Activated B cell treated with CpG ODN at 0.5 μM for 24 hours (primary cell): ENCODE measurements at regions of chr1 and their contacts with region 1.

Region 1: DNA sequence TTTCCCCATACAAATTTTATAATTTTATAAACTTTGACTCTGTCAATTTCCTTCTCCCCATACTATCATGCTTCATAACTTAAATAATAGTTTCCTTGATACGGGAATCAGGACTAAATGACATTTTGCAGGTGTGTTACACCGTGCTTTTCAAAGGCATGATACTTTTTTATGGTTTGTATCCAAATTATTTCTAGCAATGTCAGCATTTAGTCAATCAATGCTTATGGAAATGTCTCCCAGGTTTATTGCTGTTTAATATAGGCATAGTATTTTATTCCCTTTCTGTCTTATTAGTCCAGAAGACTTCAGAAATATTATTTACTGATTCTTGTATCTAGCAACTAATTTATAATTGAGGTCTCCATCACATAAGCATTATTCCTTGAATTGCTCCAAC is 23.4 kb downstream of the DRAM2 start:
- DNase-seq: no peak
- ATAC-seq: no peak
- H3K4me3 Mint-ChIP-seq: no peak overlapping the region
- H3K27ac Mint-ChIP-seq: peak overlapping the region; percentile 20
- H3K4me1 Mint-ChIP-seq: peaks cover 22% of the 10 kb centered on the region
- H3K27me3 Mint-ChIP-seq: no peaks in the 10 kb centered on the region
- CTCF ChIP-seq: no peak

Region 2: DNA sequence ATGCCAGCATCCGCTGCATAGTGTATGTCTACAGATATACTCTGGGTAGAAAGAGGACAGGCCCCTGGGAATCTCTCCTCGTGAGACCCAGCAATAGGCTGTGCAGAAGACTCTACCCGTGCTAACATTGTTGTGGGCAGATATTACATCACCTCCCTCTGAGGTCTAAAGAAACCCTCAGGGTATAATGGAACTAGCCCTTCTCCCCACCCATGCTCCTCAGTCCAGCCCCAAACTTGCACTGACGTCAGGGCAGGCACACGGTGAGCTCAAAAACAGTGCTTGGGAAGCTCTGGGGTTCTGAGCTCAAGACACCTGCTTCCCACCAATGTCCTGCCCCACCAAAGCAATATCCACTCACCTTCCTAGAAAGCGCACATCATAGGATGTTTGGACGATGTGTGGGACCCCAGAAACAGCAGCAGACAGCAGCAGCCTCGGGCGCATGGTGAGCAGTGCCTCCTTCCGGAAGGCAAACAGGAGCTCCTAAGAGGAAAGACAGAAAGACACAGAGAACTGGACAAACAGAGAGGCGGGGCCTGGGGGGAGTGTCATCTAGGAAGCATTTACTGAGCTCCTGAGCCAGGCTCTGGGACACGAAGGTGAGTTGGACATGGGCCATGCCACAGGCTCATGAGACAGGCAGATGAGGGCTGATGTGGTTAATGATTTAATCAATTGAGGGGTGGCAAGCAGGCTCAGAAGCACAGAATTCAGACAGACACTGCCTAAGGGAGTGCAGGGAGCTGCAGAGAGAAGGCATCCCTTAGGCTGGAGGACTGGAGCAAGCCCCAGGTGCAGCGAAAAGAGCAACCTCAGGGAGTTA is 306.3 kb after region 1 on chr1:
- CTCF ChIA-PET with region 1: no interaction called
- POLR2A ChIA-PET with region 1: interaction called, 11 read pairs
- intact Hi-C with region 1: no loop called
- DNase-seq: no peak
- ATAC-seq: no peak
- H3K4me3 Mint-ChIP-seq: no peak overlapping the region
- H3K27ac Mint-ChIP-seq: no peak overlapping the region
- H3K4me1 Mint-ChIP-seq: no peaks in the 10 kb centered on the region
- H3K27me3 Mint-ChIP-seq: peaks cover 2% of the 10 kb centered on the region
- CTCF ChIP-seq: no peak